ENCODE measurements at regions of chr2 and their contacts with region 1.

Region 1: GRCh38 chr2:216687646-216688045 is 7.7 kb downstream of the IGFBP5 start:
- DNase-seq: peak; percentile 38 to 47
- ATAC-seq: peak in 1 of 2 experiments; percentile 61; a peak in 3 of 6 replicates
- H3K4me3 ChIP-seq: no peak overlapping the region
- H3K27ac ChIP-seq: no peak overlapping the region
- H3K4me1 ChIP-seq: peaks cover 16% of the 10 kb centered on the region; the same call in 2 of the 3 replicates
- CTCF ChIP-seq: peak; percentile 37; the same call in 2 of the 3 replicates
- EP300 ChIP-seq: no peak
- POLR2A ChIP-seq: no peak
- RAD21 ChIP-seq: peak; percentile 17 to 25; a peak in 1 of 5 replicates

Region 2: GRCh38 chr2:217510771-217511291 is 823.2 kb after region 1 on chr2:
- CTCF ChIA-PET with region 1: interaction called, 14 read pairs
- POLR2A ChIA-PET with region 1: no interaction called
- DNase-seq: peak; percentile 69 to 85
- ATAC-seq: peak; percentile 83 to 95
- H3K4me3 ChIP-seq: no peak overlapping the region
- H3K27ac ChIP-seq: peak overlapping the region in 1 of 2 experiments; percentile 42; a peak in 2 of 6 replicates
- H3K4me1 ChIP-seq: peaks cover 7% of the 10 kb centered on the region; the same call in 2 of the 3 replicates
- CTCF ChIP-seq: peak; percentile 83
- EP300 ChIP-seq: no peak
- POLR2A ChIP-seq: no peak
- RAD21 ChIP-seq: peak; percentile 95 to 96